ENCODE measurements at regions of chr10 and their contacts with region 1.

Region 1: DNA sequence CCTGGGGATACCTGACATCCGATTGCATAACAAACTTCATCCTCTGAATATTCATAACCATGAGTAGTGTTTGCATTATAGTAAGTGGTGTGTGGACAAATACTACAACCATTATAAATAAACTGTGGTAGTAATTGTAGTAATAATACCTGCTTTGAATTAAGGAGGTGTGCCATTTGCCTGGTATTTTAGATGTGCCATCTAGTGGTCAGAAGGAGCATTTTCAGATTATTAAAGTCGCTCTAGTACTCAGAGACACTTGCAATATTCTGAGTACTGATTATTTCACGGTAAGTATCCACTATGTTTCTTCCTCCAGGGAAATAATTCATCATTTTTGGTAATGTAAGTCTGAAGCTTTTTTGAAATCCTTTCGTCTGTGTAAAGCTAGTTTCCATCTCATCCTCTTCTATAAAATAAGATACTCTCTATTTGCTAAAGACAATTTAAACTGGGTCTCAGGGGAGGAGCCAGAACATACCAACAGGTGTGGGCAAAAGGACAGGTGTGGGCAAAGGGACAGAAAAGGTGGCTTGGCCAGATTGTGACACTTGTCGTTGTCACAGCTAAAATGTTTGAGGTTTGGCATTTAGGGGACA is 115.3 kb upstream of the WDR11 start:
- DNase-seq: peak; percentile 26
- ATAC-seq: peak; percentile 86
- H3K4me3 ChIP-seq: no peak overlapping the region
- H3K27ac ChIP-seq: no peak overlapping the region
- H3K4me1 ChIP-seq: peaks cover 0 to 9% of the 10 kb centered on the region in 2 experiments; a peak in 1 of 4 replicates
- H3K27me3 ChIP-seq: peaks cover 32% of the 10 kb centered on the region
- CTCF ChIP-seq: peak; percentile 39 to 91 (median 75); a peak in 5 of 6 replicates
- POLR2A ChIP-seq: no peak
- RAD21 ChIP-seq: peak; percentile 59

Region 2: DNA sequence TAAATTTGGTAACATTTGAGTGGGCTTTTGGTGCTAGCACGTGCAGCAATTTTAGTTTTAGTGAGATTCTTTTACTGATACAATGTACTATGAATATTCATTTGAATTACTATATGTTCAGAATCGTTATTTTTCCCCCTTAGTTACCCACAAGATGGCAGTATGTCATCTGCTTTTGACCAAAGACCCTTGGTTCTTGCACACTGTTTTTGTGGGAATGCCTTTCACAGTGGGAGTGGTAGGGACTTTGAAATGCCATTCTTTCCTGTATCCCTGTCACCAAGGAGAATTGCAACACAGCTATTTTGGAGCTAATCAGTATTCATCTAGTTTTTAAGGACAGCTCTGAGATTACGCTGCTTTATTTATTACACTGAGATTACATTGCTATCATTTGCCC is 802.7 kb before region 1 on chr10:
- CTCF ChIA-PET with region 1: no interaction called
- POLR2A ChIA-PET with region 1: no interaction called
- RAD21 ChIA-PET with region 1: no interaction called
- intact Hi-C with region 1: loop called (anchors 10 kb)
- DNase-seq: no peak
- ATAC-seq: peak; percentile 58
- H3K4me3 ChIP-seq: no peak overlapping the region
- H3K27ac ChIP-seq: no peak overlapping the region
- H3K4me1 ChIP-seq: no peaks in the 10 kb centered on the region
- H3K27me3 ChIP-seq: no peaks in the 10 kb centered on the region
- CTCF ChIP-seq: peak; percentile 30 to 60 (median 38); a peak in 4 of 6 replicates
- POLR2A ChIP-seq: no peak
- RAD21 ChIP-seq: peak; percentile 61

Region 3: GRCh38 chr10:120221873-120222485 is 513.9 kb before region 1 on chr10:
- CTCF ChIA-PET with region 1: no interaction called
- POLR2A ChIA-PET with region 1: no interaction called
- RAD21 ChIA-PET with region 1: no interaction called
- intact Hi-C with region 1: loop called (anchors 5 kb)
- DNase-seq: peak; percentile 54
- ATAC-seq: peak; percentile 93
- H3K4me3 ChIP-seq: no peak overlapping the region
- H3K27ac ChIP-seq: no peak overlapping the region
- H3K4me1 ChIP-seq: no peaks in the 10 kb centered on the region
- H3K27me3 ChIP-seq: no peaks in the 10 kb centered on the region
- CTCF ChIP-seq: peak; percentile 73 to 90 (median 83)
- POLR2A ChIP-seq: no peak
- RAD21 ChIP-seq: peak; percentile 85

Region 4: DNA sequence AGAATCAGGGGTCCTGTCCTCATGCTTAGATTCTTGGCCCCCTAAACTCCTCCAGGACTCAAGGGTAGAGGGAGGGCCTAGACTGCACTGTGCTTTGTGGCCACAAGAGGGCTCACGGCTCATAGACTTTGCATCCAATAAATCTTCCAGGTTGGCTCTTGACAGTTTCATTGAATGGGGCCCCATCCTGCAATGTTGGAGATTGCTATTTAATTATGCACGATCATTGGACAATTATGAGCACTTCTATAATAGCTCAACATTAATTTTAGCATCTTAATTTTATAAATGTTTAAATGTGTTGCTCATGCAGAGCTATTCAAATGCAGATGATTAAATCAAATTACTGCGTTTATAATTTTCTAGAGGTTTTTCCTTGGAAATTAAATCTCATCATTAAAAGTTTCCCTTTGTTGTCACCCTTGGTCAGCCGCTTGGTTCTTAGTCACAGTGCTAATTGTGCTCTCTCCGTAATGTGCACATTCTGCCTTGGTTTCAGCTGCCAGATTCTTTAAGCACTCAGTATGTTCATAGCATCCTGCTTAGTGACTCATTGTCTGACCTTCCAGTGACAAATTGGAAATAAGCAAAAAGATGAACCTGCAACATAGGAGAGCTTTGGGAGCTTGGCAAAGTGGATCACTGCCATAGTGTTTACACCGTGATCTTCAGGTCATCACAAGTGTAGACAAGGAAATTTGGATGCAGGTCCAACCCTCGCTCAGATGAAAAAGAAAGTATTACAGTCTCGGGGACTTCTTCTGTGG is 312.3 kb before region 1 on chr10:
- CTCF ChIA-PET with region 1: interaction called, 8 read pairs
- POLR2A ChIA-PET with region 1: no interaction called
- RAD21 ChIA-PET with region 1: no interaction called
- intact Hi-C with region 1: loop called (anchors 1 kb)
- DNase-seq: peak; percentile 42
- ATAC-seq: peak; percentile 90
- H3K4me3 ChIP-seq: no peak overlapping the region
- H3K27ac ChIP-seq: no peak overlapping the region
- H3K4me1 ChIP-seq: no peaks in the 10 kb centered on the region
- H3K27me3 ChIP-seq: peaks cover 26% of the 10 kb centered on the region
- CTCF ChIP-seq: peak; percentile 74 to 99 (median 98)
- POLR2A ChIP-seq: no peak
- RAD21 ChIP-seq: peak; percentile 82

Region 5: DNA sequence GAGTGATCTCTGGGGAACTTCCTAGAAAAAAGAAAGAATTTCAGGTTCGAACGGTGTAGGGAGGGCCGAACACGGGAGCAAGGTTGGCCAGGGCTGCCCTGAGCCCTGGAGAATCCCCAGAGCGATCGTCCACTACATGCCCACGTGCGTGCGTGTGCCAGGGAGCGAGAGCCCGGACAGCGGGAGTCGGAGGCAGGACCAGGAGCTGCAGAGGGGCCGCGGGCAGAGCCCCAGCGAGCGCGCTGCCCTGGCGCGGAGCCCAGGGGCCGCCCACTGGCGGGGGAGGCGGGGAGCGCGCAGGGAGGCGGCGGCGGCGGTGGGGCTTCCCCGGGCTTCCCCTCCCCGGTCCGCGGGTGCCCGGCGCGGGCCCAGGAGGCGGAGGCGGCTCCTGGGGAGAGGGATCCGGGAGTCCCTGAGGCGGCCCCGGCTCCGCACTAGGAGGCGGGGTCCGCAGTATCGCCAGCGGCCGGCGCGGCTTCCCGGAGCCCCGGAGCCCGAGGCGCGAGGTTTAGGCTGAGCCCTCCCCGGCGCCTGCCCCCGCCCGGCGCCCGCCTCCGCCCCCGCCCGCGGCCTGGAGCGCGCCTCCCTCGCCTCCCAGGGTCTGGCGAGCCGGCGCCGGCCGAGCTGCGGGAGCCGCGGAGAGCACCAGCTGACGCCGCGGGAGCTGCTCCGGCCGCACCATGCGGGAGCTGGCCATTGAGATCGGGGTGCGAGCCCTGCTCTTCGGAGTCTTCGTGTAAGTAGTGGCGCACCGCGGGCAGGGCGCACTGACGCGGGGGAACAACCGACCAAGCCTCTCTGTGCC is 279.0 kb before region 1 on chr10 and contains the start of gene PLPP4:
- CTCF ChIA-PET with region 1: no interaction called
- POLR2A ChIA-PET with region 1: no interaction called
- RAD21 ChIA-PET with region 1: no interaction called
- intact Hi-C with region 1: no loop called
- DNase-seq: no peak
- ATAC-seq: no peak
- H3K4me3 ChIP-seq: no peak within 1 kb of the TSS
- H3K27ac ChIP-seq: no peak within 1 kb of the TSS
- H3K4me1 ChIP-seq: no peaks in the 10 kb centered on the region
- H3K27me3 ChIP-seq: peaks cover 25% of the 10 kb centered on the region
- CTCF ChIP-seq: no peak
- POLR2A ChIP-seq: no peak
- RAD21 ChIP-seq: no peak
- total RNA-seq, gene PLPP4: not detected